ENCODE measurements at regions of chr16 and their contacts with region 1.

Region 1: GRCh38 chr16:19959736-19960135 is 75.1 kb upstream of the GPRC5B start:
- DNase-seq: no peak
- ATAC-seq: no peak
- H3K4me3 ChIP-seq: no peak overlapping the region
- H3K27ac ChIP-seq: no peak overlapping the region
- H3K4me1 ChIP-seq: no peaks in the 10 kb centered on the region
- H3K27me3 ChIP-seq: no peaks in the 10 kb centered on the region
- CTCF ChIP-seq: no peak
- EP300 ChIP-seq: no peak
- POLR2A ChIP-seq: no peak
- RAD21 ChIP-seq: no peak

Region 2: DNA sequence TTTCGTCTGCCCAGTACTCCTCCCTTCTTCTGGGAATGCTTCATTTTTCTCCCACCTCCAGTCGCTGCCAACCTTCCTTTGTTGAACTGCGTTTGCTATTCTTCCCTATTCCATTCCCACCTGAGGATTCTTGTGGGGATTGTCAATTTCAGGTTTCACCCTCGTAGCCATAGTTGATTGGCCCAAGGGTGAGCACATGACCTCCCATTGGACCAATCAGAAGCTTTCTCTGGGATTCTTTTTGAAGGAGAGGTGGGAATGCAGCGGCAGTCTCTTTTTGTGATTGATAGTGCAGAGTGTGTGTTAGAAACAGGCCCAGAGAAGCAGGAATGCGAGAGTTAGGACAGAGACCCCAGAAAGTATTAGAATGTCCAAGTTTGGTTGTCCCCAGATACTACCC is 26.0 kb before region 1 on chr16:
- CTCF ChIA-PET with region 1: no interaction called
- POLR2A ChIA-PET with region 1: no interaction called
- RAD21 ChIA-PET with region 1: no interaction called
- SMC1A ChIA-PET with region 1: no interaction called
- in situ Hi-C with region 1: no loop called
- intact Hi-C with region 1: loop called (anchors 1 kb)
- DNase-seq: no peak
- ATAC-seq: no peak
- H3K4me3 ChIP-seq: no peak overlapping the region
- H3K27ac ChIP-seq: no peak overlapping the region
- H3K4me1 ChIP-seq: no peaks in the 10 kb centered on the region
- H3K27me3 ChIP-seq: no peaks in the 10 kb centered on the region
- CTCF ChIP-seq: no peak
- EP300 ChIP-seq: no peak
- POLR2A ChIP-seq: no peak
- RAD21 ChIP-seq: no peak